ENCODE measurements at regions of chr5 and their contacts with region 1.

Region 1: GRCh38 chr5:126808521-126808988 is 31.6 kb downstream of the LMNB1 start:
- DNase-seq: peak; percentile 15
- ATAC-seq: peak; percentile 74
- H3K4me3 ChIP-seq: no peak overlapping the region
- H3K27ac ChIP-seq: no peak overlapping the region
- H3K4me1 ChIP-seq: no peaks in the 10 kb centered on the region
- H3K27me3 ChIP-seq: no peaks in the 10 kb centered on the region
- CTCF ChIP-seq: no peak
- EP300 ChIP-seq: no peak
- POLR2A ChIP-seq: no peak
- RAD21 ChIP-seq: no peak

Region 2: GRCh38 chr5:126544087-126544740 is 264.3 kb before region 1 on chr5:
- CTCF ChIA-PET with region 1: no interaction called
- POLR2A ChIA-PET with region 1: no interaction called
- in situ Hi-C with region 1: no loop called
- intact Hi-C with region 1: loop called (anchors 5 kb)
- DNase-seq: peak; percentile 58
- ATAC-seq: peak; percentile 86
- H3K4me3 ChIP-seq: no peak overlapping the region
- H3K27ac ChIP-seq: peak overlapping the region; percentile 60
- H3K4me1 ChIP-seq: peaks cover 26% of the 10 kb centered on the region
- H3K27me3 ChIP-seq: no peaks in the 10 kb centered on the region
- CTCF ChIP-seq: peak; percentile 79
- EP300 ChIP-seq: no peak
- POLR2A ChIP-seq: no peak
- RAD21 ChIP-seq: peak; percentile 57; the same call in 1 of the 2 replicates

Region 3: GRCh38 chr5:126656396-126657007 is 152.1 kb before region 1 on chr5:
- CTCF ChIA-PET with region 1: interaction called, 9 read pairs
- POLR2A ChIA-PET with region 1: no interaction called
- in situ Hi-C with region 1: loop called (anchors 10 kb)
- intact Hi-C with region 1: loop called (anchors 2 kb)
- DNase-seq: peak; percentile 41
- ATAC-seq: no peak
- H3K4me3 ChIP-seq: no peak overlapping the region
- H3K27ac ChIP-seq: no peak overlapping the region
- H3K4me1 ChIP-seq: peaks cover 43% of the 10 kb centered on the region
- H3K27me3 ChIP-seq: no peaks in the 10 kb centered on the region
- CTCF ChIP-seq: peak; percentile 77
- EP300 ChIP-seq: no peak
- POLR2A ChIP-seq: no peak
- RAD21 ChIP-seq: peak; percentile 51

Region 4: DNA sequence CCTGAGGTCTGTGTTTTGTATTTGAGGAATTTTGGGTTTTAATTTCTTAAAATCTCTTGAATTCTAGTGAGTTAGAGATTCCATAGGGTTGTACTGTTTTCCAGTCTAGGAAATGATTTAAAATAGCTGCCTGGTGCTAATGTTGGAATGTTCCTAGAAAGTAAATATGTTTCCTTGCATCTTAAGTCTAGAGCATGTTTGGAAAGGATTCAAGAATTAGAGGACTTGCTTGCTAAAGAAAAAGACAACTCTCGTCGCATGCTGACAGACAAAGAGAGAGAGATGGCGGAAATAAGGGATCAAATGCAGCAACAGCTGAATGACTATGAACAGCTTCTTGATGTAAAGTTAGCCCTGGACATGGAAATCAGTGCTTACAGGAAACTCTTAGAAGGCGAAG is 10.2 kb after region 1 on chr5:
- CTCF ChIA-PET with region 1: no interaction called
- POLR2A ChIA-PET with region 1: no interaction called
- in situ Hi-C with region 1: no loop called
- intact Hi-C with region 1: no loop called
- DNase-seq: no peak
- ATAC-seq: no peak
- H3K4me3 ChIP-seq: no peak overlapping the region
- H3K27ac ChIP-seq: no peak overlapping the region
- H3K4me1 ChIP-seq: no peaks in the 10 kb centered on the region
- H3K27me3 ChIP-seq: no peaks in the 10 kb centered on the region
- CTCF ChIP-seq: no peak
- EP300 ChIP-seq: no peak
- POLR2A ChIP-seq: no peak
- RAD21 ChIP-seq: no peak

Measured in HepG2 (cell line).